A549 (cell line): ENCODE measurements at regions of chr15 and their contacts with region 1.

Region 1: GRCh38 chr15:43903864-43904290 is 77.1 kb downstream of the WDR76 start:
- DNase-seq: peak; percentile 44 to 48
- ATAC-seq: peak; percentile 91 to 94
- H3K4me3 ChIP-seq: no peak overlapping the region
- H3K27ac ChIP-seq: peak overlapping the region in 1 of 2 experiments; percentile 54; a peak in 2 of 6 replicates
- H3K4me1 ChIP-seq: peaks cover 9% of the 10 kb centered on the region
- CTCF ChIP-seq: peak; percentile 74
- EP300 ChIP-seq: no peak
- POLR2A ChIP-seq: no peak
- RAD21 ChIP-seq: peak; percentile 86 to 87

Region 2: DNA sequence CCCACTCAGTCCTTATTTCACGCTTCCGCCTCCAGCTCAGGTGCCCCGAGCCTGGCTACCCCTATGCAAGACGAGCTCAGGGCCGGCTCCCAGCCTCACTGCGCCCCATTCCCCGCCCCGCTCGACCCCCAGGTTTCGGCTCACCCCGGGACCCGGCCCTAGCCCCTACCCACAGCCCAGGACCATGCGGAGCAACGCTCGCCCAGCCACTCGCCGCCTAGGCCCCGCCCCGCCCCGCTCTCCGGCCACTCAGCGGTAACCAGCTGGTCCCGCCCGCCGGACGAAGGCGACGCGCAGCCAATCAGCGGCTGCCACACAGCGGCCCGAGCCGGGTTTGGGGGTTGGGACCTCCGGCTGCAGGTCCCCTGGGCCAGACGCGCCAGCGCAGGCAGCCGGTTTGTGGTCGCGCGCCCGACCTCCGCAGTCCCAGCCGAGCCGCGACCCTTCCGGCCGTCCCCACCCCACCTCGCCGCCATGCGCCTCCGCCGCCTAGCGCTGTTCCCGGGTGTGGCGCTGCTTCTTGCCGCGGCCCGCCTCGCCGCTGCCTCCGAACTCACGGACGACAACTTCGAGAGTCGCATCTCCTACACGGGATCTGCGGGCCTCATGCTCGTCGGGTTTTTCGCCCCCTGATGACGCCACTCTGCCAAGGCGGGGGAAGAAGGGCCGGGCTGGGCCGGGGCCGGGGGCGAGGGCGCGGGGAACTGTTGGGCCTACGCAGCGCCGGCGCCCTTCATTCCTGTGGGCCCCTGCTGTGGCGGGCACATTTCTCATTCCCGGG is 255.0 kb before region 1 on chr15 and contains the start of gene CATSPER2:
- CTCF ChIA-PET with region 1: no interaction called
- POLR2A ChIA-PET with region 1: no interaction called
- DNase-seq: no peak
- ATAC-seq: peak in 1 of 2 experiments; percentile 85; a peak in 3 of 6 replicates
- H3K4me3 ChIP-seq: no peak within 1 kb of the TSS
- H3K27ac ChIP-seq: no peak within 1 kb of the TSS
- H3K4me1 ChIP-seq: no peaks in the 10 kb centered on the region
- CTCF ChIP-seq: no peak
- EP300 ChIP-seq: no peak
- POLR2A ChIP-seq: no peak
- RAD21 ChIP-seq: no peak
- polyA plus RNA-seq, gene CATSPER2: 2.0 and 2.7 TPM in 2 replicates

Region 3: DNA sequence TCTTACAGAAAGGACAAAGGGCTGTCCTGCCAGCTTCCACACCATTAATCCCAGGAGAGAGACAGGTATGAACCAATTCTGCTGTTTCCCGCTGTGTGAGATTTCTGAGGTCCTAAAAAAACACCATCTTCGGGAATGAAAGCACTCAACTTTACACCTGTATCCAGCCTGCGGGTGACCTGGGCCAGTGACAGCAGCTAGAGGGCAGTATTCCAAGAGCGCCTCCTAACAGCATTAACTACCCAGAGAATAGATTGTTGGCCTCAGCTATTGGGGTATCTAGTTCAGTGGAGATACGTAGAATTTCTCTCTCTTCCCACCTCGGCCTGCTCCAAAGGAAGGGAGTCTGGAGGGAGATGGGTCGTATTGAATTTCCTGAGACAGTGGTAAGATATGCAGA is 21.9 kb before region 1 on chr15:
- CTCF ChIA-PET with region 1: interaction called, 10 read pairs
- POLR2A ChIA-PET with region 1: no interaction called
- DNase-seq: no peak
- ATAC-seq: peak in 1 of 2 experiments; percentile 69; a peak in 3 of 6 replicates
- H3K4me3 ChIP-seq: no peak overlapping the region
- H3K27ac ChIP-seq: no peak overlapping the region
- H3K4me1 ChIP-seq: no peaks in the 10 kb centered on the region
- CTCF ChIP-seq: peak; percentile 40; the same call in 2 of the 3 replicates
- EP300 ChIP-seq: no peak
- POLR2A ChIP-seq: no peak
- RAD21 ChIP-seq: 0 out of 5 replicates have a peak, but pooled peaks of 1 of the 2 experiments have one; percentile 12

Region 4: DNA sequence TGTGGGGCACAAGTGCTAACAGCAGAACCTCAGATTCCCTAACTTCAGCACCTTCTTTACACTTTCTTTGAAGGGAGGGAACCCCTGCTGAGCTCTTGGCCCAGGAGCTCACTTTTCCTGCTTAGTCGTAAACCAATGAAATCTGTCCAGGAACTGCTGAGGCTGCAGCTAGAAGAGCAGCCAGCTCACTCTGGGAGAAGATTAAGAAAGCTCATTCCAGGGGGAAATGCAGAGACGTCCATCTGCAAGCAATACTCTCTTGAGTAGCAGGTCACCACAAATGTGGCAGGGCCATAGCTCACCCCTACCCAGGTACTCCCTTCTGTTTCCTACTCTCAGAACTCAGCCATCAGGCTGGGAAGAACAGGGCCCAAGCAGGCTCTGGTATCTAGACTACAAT is 26.2 kb after region 1 on chr15:
- CTCF ChIA-PET with region 1: interaction called, 20 read pairs
- POLR2A ChIA-PET with region 1: no interaction called
- DNase-seq: no peak
- ATAC-seq: no peak
- H3K4me3 ChIP-seq: no peak overlapping the region
- H3K27ac ChIP-seq: no peak overlapping the region
- H3K4me1 ChIP-seq: no peaks in the 10 kb centered on the region
- CTCF ChIP-seq: no peak
- EP300 ChIP-seq: no peak
- POLR2A ChIP-seq: no peak
- RAD21 ChIP-seq: no peak

Region 5: DNA sequence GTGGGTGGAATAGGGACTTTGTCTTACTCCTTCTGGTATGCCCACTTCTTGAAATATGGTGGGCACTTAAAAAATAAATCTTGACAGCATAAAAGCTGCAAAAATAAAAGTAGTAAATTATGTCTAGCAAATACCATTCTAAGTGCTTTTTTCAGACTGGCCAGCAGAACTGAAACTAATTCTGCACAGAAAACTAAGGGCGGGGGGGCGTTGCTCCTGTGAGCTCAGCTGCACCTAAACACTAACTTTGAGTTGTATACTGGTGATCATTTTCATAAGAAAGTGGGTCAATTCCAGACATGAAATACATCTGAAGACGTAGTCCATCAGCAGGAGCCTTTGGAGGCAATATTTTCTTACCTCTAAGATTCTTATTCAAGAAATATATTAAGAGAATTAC is 37.7 kb after region 1 on chr15:
- CTCF ChIA-PET with region 1: interaction called, 10 read pairs
- POLR2A ChIA-PET with region 1: no interaction called
- DNase-seq: no peak
- ATAC-seq: no peak
- H3K4me3 ChIP-seq: no peak overlapping the region
- H3K27ac ChIP-seq: no peak overlapping the region
- H3K4me1 ChIP-seq: no peaks in the 10 kb centered on the region
- CTCF ChIP-seq: no peak
- EP300 ChIP-seq: no peak
- POLR2A ChIP-seq: no peak
- RAD21 ChIP-seq: no peak

Region 6: GRCh38 chr15:44066316-44066740 is 162.5 kb after region 1 on chr15:
- CTCF ChIA-PET with region 1: interaction called, 14 read pairs
- POLR2A ChIA-PET with region 1: no interaction called
- DNase-seq: peak; percentile 24 to 75
- ATAC-seq: peak; percentile 76 to 80; a peak in 5 of 6 replicates
- H3K4me3 ChIP-seq: no peak overlapping the region
- H3K27ac ChIP-seq: peak overlapping the region; percentile 37 to 72; a peak in 4 of 6 replicates
- H3K4me1 ChIP-seq: no peaks in the 10 kb centered on the region
- CTCF ChIP-seq: peak; percentile 80
- EP300 ChIP-seq: no peak
- POLR2A ChIP-seq: no peak
- RAD21 ChIP-seq: peak; percentile 76

Region 7: GRCh38 chr15:44215594-44215993 is 311.7 kb after region 1 on chr15:
- CTCF ChIA-PET with region 1: interaction called, 34 read pairs
- POLR2A ChIA-PET with region 1: no interaction called
- DNase-seq: peak; percentile 24 to 49
- ATAC-seq: peak; percentile 47 to 81; a peak in 4 of 6 replicates
- H3K4me3 ChIP-seq: no peak overlapping the region
- H3K27ac ChIP-seq: peak overlapping the region; percentile 51 to 55
- H3K4me1 ChIP-seq: peaks cover 20% of the 10 kb centered on the region
- CTCF ChIP-seq: no peak
- EP300 ChIP-seq: no peak
- POLR2A ChIP-seq: no peak
- RAD21 ChIP-seq: no peak